ENCODE measurements at regions of chr22 and their contacts with region 1.

Region 1: GRCh38 chr22:23767673-23768548 is at the start of gene CHCHD10:
- DNase-seq: no peak
- H3K4me3 ChIP-seq: peak within 1 kb of the TSS; percentile 67
- CTCF ChIP-seq: peak; percentile 96

Region 2: DNA sequence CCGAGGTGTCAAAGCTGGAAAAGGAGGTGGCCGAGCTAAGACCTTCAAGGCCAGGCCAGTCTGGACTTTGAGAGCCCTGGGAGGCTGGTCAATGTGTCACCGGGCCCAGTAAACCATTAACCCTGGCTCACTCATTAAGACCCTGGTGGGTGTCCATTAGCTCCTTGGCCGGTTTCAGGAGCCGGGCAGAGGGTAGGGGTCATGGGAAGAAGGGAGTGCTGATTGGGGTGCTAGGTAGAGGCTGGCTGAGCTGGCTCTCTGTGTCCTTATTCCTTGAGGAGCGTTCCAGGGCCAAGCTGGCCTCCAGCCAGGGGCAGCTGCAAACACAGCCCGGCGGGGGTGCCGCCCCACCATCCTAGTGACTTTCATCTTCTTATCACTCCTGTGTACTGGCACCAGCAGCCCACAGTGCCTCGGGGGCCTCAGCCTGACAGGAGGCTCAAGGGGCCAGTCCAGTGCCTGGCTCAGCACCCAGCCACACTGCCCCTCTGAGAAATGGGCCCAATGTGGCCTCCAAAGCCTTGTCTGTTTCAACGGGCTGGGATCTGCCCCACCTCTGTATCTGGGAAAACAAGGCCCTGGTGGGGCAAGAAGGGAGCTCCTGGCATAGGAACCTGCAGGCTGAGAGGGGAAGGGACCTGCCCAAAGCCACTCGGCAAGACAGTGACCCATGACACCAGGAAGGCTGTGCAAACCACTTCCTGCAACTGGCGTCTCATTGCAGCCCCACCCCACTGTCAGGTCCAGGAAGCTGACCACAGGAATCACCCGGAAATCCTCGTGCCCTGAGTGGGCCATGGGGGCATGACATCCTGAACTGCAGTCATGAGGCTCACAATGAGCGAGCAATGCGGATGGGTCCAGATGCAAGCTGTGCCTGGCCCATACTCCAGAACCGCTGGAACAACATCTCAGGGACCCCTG is 92.2 kb before region 1 on chr22:
- CTCF ChIA-PET with region 1: no interaction called
- POLR2A ChIA-PET with region 1: no interaction called
- DNase-seq: no peak
- H3K4me3 ChIP-seq: no peak overlapping the region
- CTCF ChIP-seq: no peak

Region 3: GRCh38 chr22:23750714-23751440 is 17.0 kb before region 1 on chr22 and contains the start of gene ZNF70:
- CTCF ChIA-PET with region 1: interaction called, 10 read pairs
- POLR2A ChIA-PET with region 1: no interaction called
- DNase-seq: no peak
- H3K4me3 ChIP-seq: peak within 1 kb of the TSS; percentile 78
- CTCF ChIP-seq: peak; percentile 37

Region 4: DNA sequence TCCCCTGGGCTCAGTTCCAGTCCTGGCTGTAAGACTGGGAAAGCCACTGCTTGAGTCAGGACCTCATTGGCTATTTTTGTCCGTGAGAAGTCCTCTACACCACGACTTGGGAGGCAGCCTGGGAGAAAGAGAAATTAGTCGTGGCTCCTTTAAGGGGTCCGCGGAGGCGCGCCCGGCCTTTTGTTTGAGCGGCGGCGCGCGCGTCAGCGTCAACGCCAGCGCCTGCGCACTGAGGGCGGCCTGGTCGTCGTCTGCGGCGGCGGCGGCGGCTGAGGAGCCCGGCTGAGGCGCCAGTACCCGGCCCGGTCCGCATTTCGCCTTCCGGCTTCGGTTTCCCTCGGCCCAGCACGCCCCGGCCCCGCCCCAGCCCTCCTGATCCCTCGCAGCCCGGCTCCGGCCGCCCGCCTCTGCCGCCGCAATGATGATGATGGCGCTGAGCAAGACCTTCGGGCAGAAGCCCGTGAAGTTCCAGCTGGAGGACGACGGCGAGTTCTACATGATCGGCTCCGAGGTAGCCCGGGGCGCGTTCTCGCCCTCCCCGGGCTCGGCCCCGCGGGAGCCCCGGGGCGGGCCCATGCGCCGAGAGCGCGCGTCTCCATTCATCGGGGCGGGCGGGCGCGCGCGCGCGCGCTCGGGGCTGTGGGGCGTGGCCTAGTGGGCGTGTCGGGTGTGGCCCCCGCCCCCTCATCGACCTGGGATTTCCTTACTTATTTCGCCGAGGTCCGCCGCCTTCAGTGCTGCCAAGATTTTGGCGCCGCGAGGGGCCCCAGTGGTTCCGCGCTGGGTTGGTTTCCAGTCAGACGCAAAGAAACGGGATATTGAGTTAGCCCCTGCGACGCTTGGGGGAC is 19.1 kb after region 1 on chr22 and contains the start of gene SMARCB1:
- CTCF ChIA-PET with region 1: interaction called, 15 read pairs
- POLR2A ChIA-PET with region 1: interaction called, 3 read pairs
- DNase-seq: peak; percentile 69
- H3K4me3 ChIP-seq: peak within 1 kb of the TSS; percentile 90
- CTCF ChIP-seq: no peak

Region 5: GRCh38 chr22:23826465-23827199 is 58.7 kb after region 1 on chr22:
- CTCF ChIA-PET with region 1: interaction called, 21 read pairs
- POLR2A ChIA-PET with region 1: interaction called, 3 read pairs
- DNase-seq: peak; percentile 63
- H3K4me3 ChIP-seq: no peak overlapping the region
- CTCF ChIP-seq: no peak

Region 6: GRCh38 chr22:23857606-23858483 is 89.9 kb after region 1 on chr22 and contains the start of gene SLC2A11:
- CTCF ChIA-PET with region 1: interaction called, 387 read pairs
- POLR2A ChIA-PET with region 1: interaction called, 4 read pairs
- DNase-seq: peak; percentile 65
- H3K4me3 ChIP-seq: peak within 1 kb of the TSS; percentile 72
- CTCF ChIP-seq: peak; percentile 23